Pancreas (tissue), 10 donors: ENCODE measurements at regions of chr4 and their contacts with region 1.

Region 1: GRCh38 chr4:39689970-39690369 is 8.0 kb upstream of the UBE2K start:
- DNase-seq: no peak
- ATAC-seq: no peak
- H3K4me3 ChIP-seq: no peak overlapping the region
- H3K27ac ChIP-seq: no peak overlapping the region
- H3K4me1 ChIP-seq: no peaks in the 10 kb centered on the region
- H3K27me3 ChIP-seq: no peaks in the 10 kb centered on the region
- CTCF ChIP-seq: no peak

Region 2: GRCh38 chr4:39825741-39826231 is 135.8 kb after region 1 on chr4:
- intact Hi-C with region 1: loop called in 1 of 3 experiments (anchors 5 kb)
- DNase-seq: no peak
- ATAC-seq: no peak
- H3K4me3 ChIP-seq: no peak overlapping the region
- H3K27ac ChIP-seq: no peak overlapping the region
- H3K4me1 ChIP-seq: no peaks in the 10 kb centered on the region
- H3K27me3 ChIP-seq: no peaks in the 10 kb centered on the region
- CTCF ChIP-seq: no peak